ENCODE measurements at regions of chr5 and their contacts with region 1.

Region 1: DNA sequence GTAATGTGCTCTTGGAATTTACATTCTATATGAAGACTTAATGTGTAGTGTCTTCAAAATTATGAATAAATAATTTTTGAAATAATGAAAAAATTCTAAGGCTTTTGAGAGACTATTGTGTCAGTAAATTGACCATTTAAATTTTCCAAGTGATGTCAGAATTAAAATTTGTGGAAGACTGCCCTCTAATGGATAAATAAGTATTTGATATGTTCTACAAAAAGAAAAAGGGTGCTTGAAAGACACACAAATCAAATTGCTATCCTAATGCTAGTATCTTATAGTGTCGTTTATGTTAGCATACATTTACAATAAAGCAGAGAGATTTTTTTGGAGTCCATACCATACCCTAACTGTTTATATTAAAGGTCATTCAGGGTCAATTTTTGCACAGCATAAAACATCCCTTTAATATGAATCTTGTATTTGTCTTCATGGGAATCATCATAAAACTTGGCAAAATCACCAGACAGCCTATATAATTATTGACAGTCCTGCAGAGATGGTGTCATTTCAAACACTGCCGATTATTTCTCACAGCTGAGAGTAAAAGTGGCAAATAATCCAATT is 120.8 kb upstream of the SLC27A6 start:
- DNase-seq: peak; percentile 28
- ATAC-seq: no peak
- H3K4me3 ChIP-seq: no peak overlapping the region
- H3K27ac ChIP-seq: no peak overlapping the region
- H3K4me1 ChIP-seq: no peaks in the 10 kb centered on the region
- H3K27me3 ChIP-seq: no peaks in the 10 kb centered on the region
- CTCF ChIP-seq: peak; percentile 51
- POLR2A ChIP-seq: no peak
- RAD21 ChIP-seq: peak; percentile 54

Region 2: DNA sequence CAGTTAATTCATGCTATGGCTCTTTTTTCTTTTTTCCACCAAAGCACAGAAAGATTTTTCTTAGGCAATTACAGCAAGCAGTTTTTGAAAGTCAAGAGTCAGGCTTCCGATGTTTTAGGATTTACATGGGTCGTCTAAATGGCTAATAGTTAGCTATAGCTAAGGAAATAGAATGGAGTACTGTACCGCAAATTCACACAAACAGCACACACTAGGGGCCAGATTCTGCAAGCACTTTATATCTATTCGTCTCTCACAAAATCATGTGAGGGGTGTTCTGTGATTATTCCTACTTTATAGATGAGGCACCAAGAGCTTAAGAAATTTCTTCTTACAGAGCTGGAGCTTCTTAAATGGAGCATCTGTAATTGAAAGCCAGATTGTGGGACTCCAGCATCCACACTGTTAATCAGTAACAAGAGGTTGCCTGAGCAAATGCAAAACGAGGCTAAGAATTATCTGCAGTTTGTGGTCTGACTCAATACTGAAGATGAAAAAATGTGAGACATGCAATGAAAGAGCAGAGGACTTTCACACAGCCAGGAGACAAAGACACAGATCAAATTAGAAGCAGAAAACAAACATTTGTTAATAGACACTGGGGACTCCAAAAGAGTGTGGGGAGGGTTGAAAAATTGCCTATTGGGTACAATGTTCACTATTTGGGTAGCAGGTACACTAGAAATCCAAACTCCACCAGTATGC is 1258.2 kb before region 1 on chr5:
- CTCF ChIA-PET with region 1: no interaction called
- POLR2A ChIA-PET with region 1: no interaction called
- dilution Hi-C with region 1: no loop called
- in situ Hi-C with region 1: loop called (anchors 25 kb)
- intact Hi-C with region 1: no loop called
- DNase-seq: no peak
- ATAC-seq: no peak
- H3K4me3 ChIP-seq: no peak overlapping the region
- H3K27ac ChIP-seq: no peak overlapping the region
- H3K4me1 ChIP-seq: no peaks in the 10 kb centered on the region
- H3K27me3 ChIP-seq: no peaks in the 10 kb centered on the region; the same call in 1 of the 2 replicates
- CTCF ChIP-seq: no peak
- POLR2A ChIP-seq: no peak
- RAD21 ChIP-seq: no peak

Region 3: GRCh38 chr5:128378196-128378595 is 466.2 kb before region 1 on chr5:
- CTCF ChIA-PET with region 1: no interaction called
- POLR2A ChIA-PET with region 1: no interaction called
- dilution Hi-C with region 1: no loop called
- in situ Hi-C with region 1: no loop called
- intact Hi-C with region 1: loop called (anchors 10 kb)
- DNase-seq: peak; percentile 28
- ATAC-seq: 0 out of 2 replicates have a peak, but pooled peaks have one; percentile 35
- H3K4me3 ChIP-seq: no peak overlapping the region
- H3K27ac ChIP-seq: no peak overlapping the region
- H3K4me1 ChIP-seq: no peaks in the 10 kb centered on the region
- H3K27me3 ChIP-seq: no peaks in the 10 kb centered on the region
- CTCF ChIP-seq: no peak
- POLR2A ChIP-seq: no peak
- RAD21 ChIP-seq: no peak

Region 4: DNA sequence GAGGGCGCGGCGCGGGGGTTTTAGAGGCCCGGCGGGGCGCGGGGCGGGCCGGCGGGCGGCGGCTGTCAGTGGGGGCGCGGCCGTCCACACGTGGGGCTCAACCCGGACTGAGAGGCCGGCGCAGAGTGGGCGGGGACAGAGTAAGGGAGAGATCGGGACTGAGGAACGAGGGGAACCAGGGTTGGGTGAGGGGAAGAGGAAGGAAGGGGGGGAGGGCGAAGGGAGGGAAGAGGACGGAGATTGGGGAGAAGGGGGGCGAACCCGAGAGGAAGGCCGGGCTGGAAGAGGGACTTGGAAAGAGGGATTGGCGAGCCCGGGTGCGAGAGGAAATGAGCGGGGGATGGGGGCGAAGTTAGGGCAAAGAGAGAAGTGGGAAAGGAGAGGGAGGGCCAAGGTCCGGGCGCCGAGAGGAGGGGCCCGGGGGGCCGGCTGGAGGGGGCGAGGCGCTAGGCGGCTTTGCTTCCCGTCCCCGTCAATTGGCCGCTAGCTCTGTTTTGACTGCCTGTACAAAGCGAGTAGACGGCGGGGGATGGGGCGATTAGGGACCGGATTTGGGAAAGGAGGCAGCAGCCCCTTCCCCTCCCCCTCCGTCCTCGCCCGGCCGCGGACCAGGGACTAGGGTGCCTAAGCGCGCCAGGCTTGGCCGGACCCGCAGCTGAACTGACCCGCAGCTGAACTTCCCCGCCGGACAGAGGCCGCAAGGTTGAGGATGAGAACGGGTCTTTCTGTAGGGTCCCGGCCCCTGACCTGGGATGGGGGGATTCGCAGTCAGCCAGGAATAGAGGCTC is 306.0 kb before region 1 on chr5:
- CTCF ChIA-PET with region 1: no interaction called
- POLR2A ChIA-PET with region 1: no interaction called
- dilution Hi-C with region 1: no loop called
- in situ Hi-C with region 1: no loop called
- intact Hi-C with region 1: loop called (anchors 1 kb)
- DNase-seq: peak; percentile 80
- ATAC-seq: peak; percentile 89
- H3K4me3 ChIP-seq: peak overlapping the region; percentile 81
- H3K27ac ChIP-seq: peak overlapping the region; percentile 81
- H3K4me1 ChIP-seq: peaks cover 6% of the 10 kb centered on the region
- H3K27me3 ChIP-seq: no peaks in the 10 kb centered on the region
- CTCF ChIP-seq: no peak
- POLR2A ChIP-seq: no peak
- RAD21 ChIP-seq: no peak

Region 5: GRCh38 chr5:128749136-128749898 is 95.1 kb before region 1 on chr5:
- CTCF ChIA-PET with region 1: no interaction called
- POLR2A ChIA-PET with region 1: no interaction called
- dilution Hi-C with region 1: no loop called
- in situ Hi-C with region 1: no loop called
- intact Hi-C with region 1: loop called (anchors 5 kb)
- DNase-seq: no peak
- ATAC-seq: peak; percentile 70
- H3K4me3 ChIP-seq: no peak overlapping the region
- H3K27ac ChIP-seq: no peak overlapping the region
- H3K4me1 ChIP-seq: no peaks in the 10 kb centered on the region; the same call in 1 of the 2 replicates
- H3K27me3 ChIP-seq: peaks cover 4% of the 10 kb centered on the region
- CTCF ChIP-seq: no peak
- POLR2A ChIP-seq: no peak
- RAD21 ChIP-seq: no peak